ENCODE measurements at regions of chr22 and their contacts with region 1.

Region 1: GRCh38 chr22:38959590-38959989 is 2.2 kb downstream of the APOBEC3A start:
- DNase-seq: no peak
- ATAC-seq: no peak

Region 2: GRCh38 chr22:38989466-38989865 is 29.9 kb after region 1 on chr22:
- intact Hi-C with region 1: loop called (anchors 1 kb)
- DNase-seq: no peak
- ATAC-seq: no peak

Region 3: GRCh38 chr22:39078329-39078728 is 118.7 kb after region 1 on chr22:
- intact Hi-C with region 1: no loop called
- DNase-seq: no peak
- ATAC-seq: no peak

Region 4: GRCh38 chr22:39205338-39206021 is 245.9 kb after region 1 on chr22:
- intact Hi-C with region 1: no loop called
- DNase-seq: peak; percentile 43
- ATAC-seq: no peak